HepG2 (cell line): ENCODE measurements at regions of chr10 and their contacts with region 1.

Region 1: GRCh38 chr10:80699602-80700039 is 161.9 kb downstream of the SH2D4B start:
- DNase-seq: peak; percentile 46
- ATAC-seq: peak; percentile 97
- H3K4me3 ChIP-seq: no peak overlapping the region
- H3K27ac ChIP-seq: no peak overlapping the region
- H3K4me1 ChIP-seq: no peaks in the 10 kb centered on the region
- H3K27me3 ChIP-seq: no peaks in the 10 kb centered on the region; a peak in 1 of 5 replicates
- CTCF ChIP-seq: peak; percentile 91
- EP300 ChIP-seq: no peak
- POLR2A ChIP-seq: no peak
- RAD21 ChIP-seq: peak; percentile 71

Region 2: DNA sequence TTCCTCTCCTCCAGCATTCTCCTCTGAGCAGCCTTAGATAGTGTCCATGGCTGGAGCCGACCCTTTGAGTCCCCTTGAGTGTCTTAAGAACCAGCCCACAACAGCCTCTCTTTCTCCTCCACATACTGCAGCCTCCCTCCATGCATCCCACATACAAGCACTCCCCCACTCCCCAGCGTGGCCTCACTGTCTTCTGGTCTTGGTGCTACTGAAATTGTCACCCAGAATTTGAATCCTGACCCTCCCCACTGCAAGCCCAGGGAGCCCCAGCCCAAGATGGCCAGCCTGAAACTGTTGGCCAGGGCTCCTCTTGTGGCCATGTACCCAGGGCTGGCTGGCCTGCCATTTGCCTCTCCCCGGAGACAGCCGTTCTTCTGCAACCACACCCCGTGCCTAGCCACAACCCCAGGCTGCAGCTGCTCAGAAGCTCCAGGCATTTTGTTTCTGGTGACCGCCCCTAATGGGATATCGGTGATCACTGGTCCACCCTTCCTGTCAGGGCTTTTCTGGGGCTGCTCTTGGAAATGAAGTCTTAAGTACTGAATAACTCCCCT is 180.7 kb before region 1 on chr10:
- CTCF ChIA-PET with region 1: no interaction called
- POLR2A ChIA-PET with region 1: no interaction called
- in situ Hi-C with region 1: no loop called
- intact Hi-C with region 1: no loop called
- DNase-seq: no peak
- ATAC-seq: no peak
- H3K4me3 ChIP-seq: no peak overlapping the region
- H3K27ac ChIP-seq: no peak overlapping the region
- H3K4me1 ChIP-seq: peaks cover 5% of the 10 kb centered on the region
- H3K27me3 ChIP-seq: no peaks in the 10 kb centered on the region
- CTCF ChIP-seq: no peak
- EP300 ChIP-seq: no peak
- POLR2A ChIP-seq: no peak
- RAD21 ChIP-seq: no peak

Region 3: GRCh38 chr10:80924063-80924952 is 224.7 kb after region 1 on chr10:
- CTCF ChIA-PET with region 1: interaction called, 22 read pairs
- POLR2A ChIA-PET with region 1: no interaction called
- in situ Hi-C with region 1: loop called (anchors 5 kb)
- intact Hi-C with region 1: loop called (anchors 1 kb)
- DNase-seq: peak; percentile 33
- ATAC-seq: peak; percentile 85
- H3K4me3 ChIP-seq: no peak overlapping the region
- H3K27ac ChIP-seq: no peak overlapping the region
- H3K4me1 ChIP-seq: no peaks in the 10 kb centered on the region
- H3K27me3 ChIP-seq: no peaks in the 10 kb centered on the region; a peak in 1 of 5 replicates
- CTCF ChIP-seq: peak; percentile 73
- EP300 ChIP-seq: no peak
- POLR2A ChIP-seq: no peak
- RAD21 ChIP-seq: 0 out of 2 replicates have a peak, but pooled peaks have one; percentile 20